Naive thymus-derived CD4-positive, alpha-beta T cell (primary cell): ENCODE measurements at regions of chr18 and their contacts with region 1.

Region 1: DNA sequence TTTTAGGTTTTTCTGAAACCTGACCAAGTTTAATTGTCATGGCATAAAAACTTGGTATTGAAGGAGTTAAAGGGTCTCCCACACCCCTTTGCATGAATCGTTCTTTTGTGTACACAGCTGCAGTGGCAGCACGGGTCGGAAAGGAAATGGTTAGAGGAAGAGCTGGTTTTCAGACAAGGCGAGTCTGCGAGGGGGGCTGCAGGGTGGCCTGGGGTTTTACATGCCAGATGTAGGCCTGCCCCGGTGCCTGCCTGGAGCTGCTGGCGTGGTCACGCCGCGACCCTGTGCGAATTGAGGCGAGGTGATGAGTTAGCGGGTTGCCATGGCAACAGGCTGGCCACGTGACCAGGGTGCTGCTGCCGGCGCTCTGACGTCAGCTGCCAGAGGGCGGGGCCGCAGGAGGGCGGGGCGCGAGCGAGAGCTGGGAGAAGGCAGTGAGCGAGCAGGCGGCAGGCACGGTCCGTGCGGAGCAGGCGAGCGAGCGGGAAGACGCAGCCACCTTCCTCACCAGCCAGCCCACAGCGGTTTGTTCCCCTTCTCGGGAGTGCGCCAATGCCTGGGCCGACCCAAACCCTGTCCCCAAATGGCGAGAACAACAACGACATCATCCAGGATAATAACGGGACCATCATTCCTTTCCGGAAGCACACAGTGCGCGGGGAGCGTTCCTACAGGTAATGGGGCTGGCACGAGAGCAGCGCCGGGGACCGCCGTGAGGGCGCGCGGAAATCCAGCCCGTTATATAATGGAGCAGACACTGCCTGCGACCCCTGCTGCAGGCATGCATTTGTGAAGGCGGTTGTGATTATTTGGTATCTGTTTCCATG is at the start of gene MAPRE2:
- DNase-seq: peak; percentile 97 to 100 (median 99)
- ATAC-seq: peak; percentile 91
- H3K4me3 ChIP-seq: peak within 1 kb of the TSS; percentile 80
- H3K4me3 Mint-ChIP-seq: peak within 1 kb of the TSS; percentile 86 to 98 (median 97)
- H3K27ac ChIP-seq: peak within 1 kb of the TSS; percentile 95
- H3K27ac Mint-ChIP-seq: peak within 1 kb of the TSS; percentile 94 to 100 (median 98)
- H3K4me1 ChIP-seq: peaks cover 29 to 41% of the 10 kb centered on the region in 2 donors
- H3K4me1 Mint-ChIP-seq: peaks cover 31 to 73% (median 48%) of the 10 kb centered on the region in 7 donors
- H3K27me3 ChIP-seq: no peaks in the 10 kb centered on the region
- H3K27me3 Mint-ChIP-seq: peaks cover 0 to 3% (median 0%) of the 10 kb centered on the region in 5 donors
- total RNA-seq, gene MAPRE2: 44.7 to 84.4 (median 63.5) TPM

Region 2: DNA sequence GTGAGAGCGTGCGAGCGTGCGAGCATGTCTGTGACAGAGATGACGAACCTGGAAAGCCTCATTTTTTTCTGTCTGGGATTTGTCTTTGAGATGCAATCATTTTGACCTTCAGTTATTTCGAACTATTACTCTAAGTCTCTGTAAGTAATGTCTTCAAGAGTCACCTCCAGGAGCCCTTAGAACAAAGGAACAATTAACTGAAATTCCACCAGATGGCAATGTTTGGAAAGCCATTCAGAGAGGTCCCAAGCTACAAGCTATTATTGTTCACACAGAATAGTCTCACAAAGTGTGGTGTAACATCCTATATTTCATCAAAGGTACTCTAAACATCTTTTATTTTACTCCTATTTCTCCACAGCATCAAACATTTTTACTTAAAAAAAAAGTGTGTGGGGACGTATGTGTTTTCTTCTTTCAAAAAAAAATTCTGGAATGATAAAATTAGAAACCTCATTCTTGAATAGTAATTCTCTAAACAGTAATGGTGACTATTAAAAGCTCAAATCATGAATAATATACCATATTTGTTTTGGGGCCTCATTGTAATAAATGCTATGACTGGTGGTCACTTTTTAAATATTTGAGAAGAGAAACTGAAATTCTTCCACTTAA is 35.1 kb before region 1 on chr18:
- CTCF ChIA-PET with region 1: interaction called, 3 read pairs
- POLR2A ChIA-PET with region 1: interaction called, 4 read pairs
- intact Hi-C with region 1: loop called in 1 of 2 experiments (anchors 1 kb)
- DNase-seq: peak in 7 of 9 donors; percentile 29 to 66 (median 54)
- ATAC-seq: peak; percentile 80
- H3K4me3 ChIP-seq: no peak overlapping the region
- H3K4me3 Mint-ChIP-seq: no peak overlapping the region
- H3K27ac ChIP-seq: no peak overlapping the region
- H3K27ac Mint-ChIP-seq: no peak overlapping the region
- H3K4me1 ChIP-seq: no peaks in the 10 kb centered on the region
- H3K4me1 Mint-ChIP-seq: no peaks in the 10 kb centered on the region
- H3K27me3 ChIP-seq: no peaks in the 10 kb centered on the region
- H3K27me3 Mint-ChIP-seq: no peaks in the 10 kb centered on the region

Region 3: GRCh38 chr18:35077937-35078336 is 36.7 kb after region 1 on chr18:
- CTCF ChIA-PET with region 1: no interaction called
- POLR2A ChIA-PET with region 1: interaction called, 3 read pairs
- intact Hi-C with region 1: loop called in 1 of 2 experiments (anchors 2 kb)
- DNase-seq: no peak
- ATAC-seq: no peak
- H3K4me3 ChIP-seq: no peak overlapping the region
- H3K4me3 Mint-ChIP-seq: no peak overlapping the region
- H3K27ac ChIP-seq: no peak overlapping the region
- H3K27ac Mint-ChIP-seq: no peak overlapping the region
- H3K4me1 ChIP-seq: peaks cover 0 to 5% of the 10 kb centered on the region in 2 donors
- H3K4me1 Mint-ChIP-seq: peaks cover 11 to 88% (median 70%) of the 10 kb centered on the region in 7 donors
- H3K27me3 ChIP-seq: no peaks in the 10 kb centered on the region
- H3K27me3 Mint-ChIP-seq: no peaks in the 10 kb centered on the region

Region 4: GRCh38 chr18:35240664-35241447 is 199.7 kb after region 1 on chr18 and contains the start of gene ZNF397:
- CTCF ChIA-PET with region 1: no interaction called
- POLR2A ChIA-PET with region 1: interaction called, 6 read pairs
- intact Hi-C with region 1: loop called (anchors 1 kb)
- DNase-seq: peak; percentile 87 to 96 (median 91)
- ATAC-seq: peak; percentile 99
- H3K4me3 ChIP-seq: peak within 1 kb of the TSS; percentile 94
- H3K4me3 Mint-ChIP-seq: peak within 1 kb of the TSS; percentile 88 to 98 (median 96)
- H3K27ac ChIP-seq: peak within 1 kb of the TSS; percentile 97
- H3K27ac Mint-ChIP-seq: peak within 1 kb of the TSS; percentile 90 to 99 (median 98)
- H3K4me1 ChIP-seq: peaks cover 9 to 17% of the 10 kb centered on the region in 2 donors
- H3K4me1 Mint-ChIP-seq: peaks cover 16 to 41% (median 31%) of the 10 kb centered on the region in 7 donors
- H3K27me3 ChIP-seq: no peaks in the 10 kb centered on the region
- H3K27me3 Mint-ChIP-seq: no peaks in the 10 kb centered on the region
- total RNA-seq, gene ZNF397: 12.1 to 59.1 (median 27.6) TPM

Region 5: DNA sequence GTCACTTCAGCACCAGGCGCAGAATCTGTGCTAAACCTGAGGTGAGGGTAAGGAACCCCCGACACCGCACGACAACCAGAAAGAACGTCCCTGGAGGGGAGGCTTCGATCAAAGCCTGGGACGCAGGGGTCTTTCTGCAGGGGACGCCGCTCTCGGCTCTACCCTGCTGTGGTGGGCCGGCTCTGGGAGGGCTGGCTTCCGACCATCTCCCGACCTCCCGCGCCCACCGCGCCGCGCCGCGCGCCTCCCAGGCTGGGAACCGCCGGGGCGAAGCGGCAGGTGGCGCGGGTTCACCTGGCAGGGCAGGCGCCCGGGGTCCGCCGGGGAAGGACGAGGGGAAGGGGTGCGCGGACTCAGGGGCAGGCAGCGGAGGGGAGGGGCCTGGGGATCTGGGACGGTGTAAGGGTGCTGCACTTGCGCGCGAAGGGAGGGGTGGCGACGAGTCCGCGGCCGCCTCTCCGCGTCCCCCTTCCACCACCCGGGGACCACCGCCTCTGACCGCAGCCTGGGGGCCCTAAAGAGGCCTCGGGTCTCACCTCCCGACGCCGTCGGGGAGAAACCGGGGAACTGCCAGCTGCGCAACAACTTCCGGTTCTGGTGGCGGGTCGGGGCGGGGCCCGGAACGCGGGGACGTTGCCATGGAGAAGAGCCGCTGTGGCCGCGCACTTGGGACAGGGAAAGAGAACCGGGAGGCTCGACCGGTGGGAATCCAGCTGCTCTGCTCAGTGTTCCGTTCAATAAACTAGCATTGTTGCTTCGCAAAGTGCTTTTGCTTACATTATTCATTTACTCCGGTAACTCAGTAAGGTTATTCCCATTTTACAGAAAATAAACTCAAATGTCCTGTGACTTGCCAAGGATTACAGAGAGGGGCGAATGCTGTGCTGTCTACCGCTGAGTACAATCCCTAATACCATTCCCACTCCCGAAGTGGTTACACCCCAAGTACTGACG is 335.8 kb after region 1 on chr18 and contains the start of gene ZNF396:
- CTCF ChIA-PET with region 1: no interaction called
- POLR2A ChIA-PET with region 1: no interaction called
- intact Hi-C with region 1: loop called (anchors 2 kb)
- DNase-seq: peak; percentile 51 to 72 (median 58)
- ATAC-seq: peak; percentile 81
- H3K4me3 ChIP-seq: peak within 1 kb of the TSS; percentile 75
- H3K4me3 Mint-ChIP-seq: peak within 1 kb of the TSS; percentile 80 to 92 (median 88)
- H3K27ac ChIP-seq: peak within 1 kb of the TSS; percentile 55
- H3K27ac Mint-ChIP-seq: peak within 1 kb of the TSS; percentile 44 to 90 (median 74)
- H3K4me1 ChIP-seq: no peaks in the 10 kb centered on the region
- H3K4me1 Mint-ChIP-seq: peaks cover 3 to 12% (median 10%) of the 10 kb centered on the region in 7 donors
- H3K27me3 ChIP-seq: no peaks in the 10 kb centered on the region
- H3K27me3 Mint-ChIP-seq: peaks cover 0 to 29% (median 0%) of the 10 kb centered on the region in 5 donors
- total RNA-seq, gene ZNF396: 0.11 to 8.2 (median 0.54) TPM

Region 6: DNA sequence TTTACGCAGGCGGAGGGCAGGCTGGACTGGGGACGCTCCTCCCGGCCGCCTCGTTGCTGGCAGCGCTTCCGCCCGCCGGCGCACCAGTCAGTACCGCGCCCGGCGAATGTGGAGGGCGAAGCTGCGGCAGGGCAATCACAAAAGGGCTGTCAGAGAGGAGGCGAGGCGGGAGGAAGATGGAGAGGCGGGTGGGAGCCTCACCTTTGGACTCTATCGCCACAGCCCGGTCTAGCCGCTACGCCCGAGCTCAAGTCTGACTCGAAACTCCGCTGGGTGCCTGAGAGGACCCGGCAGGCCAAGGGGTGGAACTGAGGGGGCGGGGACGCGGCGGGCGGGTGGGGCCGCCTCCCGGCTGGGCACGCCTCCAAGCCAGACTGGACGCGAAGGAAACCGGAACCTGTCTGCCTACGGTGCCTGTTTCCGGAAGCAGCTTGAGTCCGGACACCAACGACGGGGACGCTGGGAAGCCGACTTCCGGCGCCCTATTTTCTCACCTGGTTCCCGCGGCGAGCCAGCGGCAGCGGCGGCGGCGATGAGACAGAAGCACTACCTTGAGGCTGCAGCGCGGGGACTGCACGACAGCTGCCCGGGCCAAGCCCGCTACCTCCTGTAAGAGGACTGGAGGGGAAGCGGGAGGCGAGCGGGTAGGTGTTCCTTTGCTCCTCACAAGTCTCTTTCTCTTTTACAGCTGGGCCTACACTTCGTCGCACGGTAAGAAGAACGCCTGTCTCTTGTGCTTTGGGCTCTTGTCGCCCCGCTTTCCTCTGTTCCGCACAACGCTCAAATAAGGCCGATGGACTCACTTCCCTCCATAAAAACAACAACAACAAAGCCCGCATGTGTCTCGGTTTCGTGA is 931.2 kb after region 1 on chr18 and contains the start of gene RMP24:
- CTCF ChIA-PET with region 1: no interaction called
- POLR2A ChIA-PET with region 1: interaction called, 3 read pairs
- intact Hi-C with region 1: loop called (anchors 1 kb)
- DNase-seq: peak; percentile 80 to 93 (median 90)
- ATAC-seq: peak; percentile 94
- H3K4me3 ChIP-seq: peak within 1 kb of the TSS; percentile 76
- H3K4me3 Mint-ChIP-seq: peak within 1 kb of the TSS; percentile 83 to 100 (median 96)
- H3K27ac ChIP-seq: peak within 1 kb of the TSS; percentile 82
- H3K27ac Mint-ChIP-seq: peak within 1 kb of the TSS; percentile 91 to 99 (median 96)
- H3K4me1 ChIP-seq: peaks cover 33% of the 10 kb centered on the region in 2 donors
- H3K4me1 Mint-ChIP-seq: peaks cover 36 to 78% (median 67%) of the 10 kb centered on the region in 7 donors
- H3K27me3 ChIP-seq: no peaks in the 10 kb centered on the region
- H3K27me3 Mint-ChIP-seq: no peaks in the 10 kb centered on the region

Region 7: GRCh38 chr18:36828630-36829361 is 1787.6 kb after region 1 on chr18 and contains the starts of genes KIAA1328 and TPGS2:
- CTCF ChIA-PET with region 1: no interaction called
- POLR2A ChIA-PET with region 1: no interaction called
- intact Hi-C with region 1: loop called in 1 of 2 experiments (anchors 10 kb)
- DNase-seq: peak; percentile 77 to 90 (median 87)
- ATAC-seq: peak; percentile 96
- H3K4me3 ChIP-seq: peak within 1 kb of the TSS; percentile 79
- H3K4me3 Mint-ChIP-seq: peak within 1 kb of the TSS; percentile 73 to 98 (median 92)
- H3K27ac ChIP-seq: peak within 1 kb of the TSS; percentile 75
- H3K27ac Mint-ChIP-seq: peak within 1 kb of the TSS; percentile 57 to 98 (median 90)
- H3K4me1 ChIP-seq: peaks cover 15 to 18% of the 10 kb centered on the region in 2 donors
- H3K4me1 Mint-ChIP-seq: peaks cover 27 to 60% (median 47%) of the 10 kb centered on the region in 7 donors
- H3K27me3 ChIP-seq: no peaks in the 10 kb centered on the region
- H3K27me3 Mint-ChIP-seq: no peaks in the 10 kb centered on the region
- total RNA-seq, gene KIAA1328: 8.1 to 17.6 (median 16.0) TPM
- total RNA-seq, gene TPGS2: 16.9 to 92.8 (median 53.5) TPM